Caco-2 (cell line): ENCODE measurements at regions of chr13 and their contacts with region 1.

Region 1: DNA sequence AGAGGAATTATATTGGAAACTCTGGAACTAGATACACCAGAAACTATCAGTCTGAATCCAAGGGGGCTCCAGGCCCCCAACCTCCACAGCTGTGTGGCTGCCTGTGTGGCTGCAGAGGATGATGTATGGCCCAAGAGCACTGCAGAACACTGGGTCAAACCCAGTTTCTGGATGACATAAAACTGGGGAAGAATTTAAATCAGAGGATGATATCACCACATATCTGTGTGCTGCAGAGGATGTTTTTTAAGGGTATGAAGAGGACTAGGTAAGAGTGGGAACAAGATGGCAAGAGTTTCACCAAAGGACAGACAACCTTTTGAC is 226.4 kb downstream of the SUCLA2 start:
- DNase-seq: no peak
- H3K4me3 ChIP-seq: no peak overlapping the region
- H3K4me3 Mint-ChIP-seq: no peak overlapping the region
- H3K27ac Mint-ChIP-seq: no peak overlapping the region
- H3K4me1 ChIP-seq: no peaks in the 10 kb centered on the region
- H3K4me1 Mint-ChIP-seq: no peaks in the 10 kb centered on the region
- H3K27me3 ChIP-seq: peaks cover 1% of the 10 kb centered on the region; the same call in 1 of the 2 replicates
- H3K27me3 Mint-ChIP-seq: peaks cover 3% of the 10 kb centered on the region
- CTCF ChIP-seq: no peak

Region 2: GRCh38 chr13:46831588-46832194 is 942.9 kb before region 1 on chr13:
- CTCF ChIA-PET with region 1: no interaction called
- POLR2A ChIA-PET with region 1: no interaction called
- intact Hi-C with region 1: loop called (anchors 1 kb)
- DNase-seq: peak in 1 of 2 experiments; percentile 56
- H3K4me3 ChIP-seq: no peak overlapping the region
- H3K4me3 Mint-ChIP-seq: no peak overlapping the region
- H3K27ac Mint-ChIP-seq: no peak overlapping the region
- H3K4me1 ChIP-seq: no peaks in the 10 kb centered on the region
- H3K4me1 Mint-ChIP-seq: no peaks in the 10 kb centered on the region
- H3K27me3 ChIP-seq: no peaks in the 10 kb centered on the region
- H3K27me3 Mint-ChIP-seq: peaks cover 14% of the 10 kb centered on the region
- CTCF ChIP-seq: peak; percentile 77 to 86

Region 3: GRCh38 chr13:47426126-47426849 is 348.3 kb before region 1 on chr13:
- CTCF ChIA-PET with region 1: no interaction called
- POLR2A ChIA-PET with region 1: no interaction called
- intact Hi-C with region 1: loop called (anchors 10 kb)
- DNase-seq: no peak
- H3K4me3 ChIP-seq: no peak overlapping the region
- H3K4me3 Mint-ChIP-seq: no peak overlapping the region
- H3K27ac Mint-ChIP-seq: no peak overlapping the region
- H3K4me1 ChIP-seq: no peaks in the 10 kb centered on the region
- H3K4me1 Mint-ChIP-seq: no peaks in the 10 kb centered on the region
- H3K27me3 ChIP-seq: no peaks in the 10 kb centered on the region; the same call in 1 of the 2 replicates
- H3K27me3 Mint-ChIP-seq: peaks cover 4% of the 10 kb centered on the region
- CTCF ChIP-seq: no peak

Region 4: DNA sequence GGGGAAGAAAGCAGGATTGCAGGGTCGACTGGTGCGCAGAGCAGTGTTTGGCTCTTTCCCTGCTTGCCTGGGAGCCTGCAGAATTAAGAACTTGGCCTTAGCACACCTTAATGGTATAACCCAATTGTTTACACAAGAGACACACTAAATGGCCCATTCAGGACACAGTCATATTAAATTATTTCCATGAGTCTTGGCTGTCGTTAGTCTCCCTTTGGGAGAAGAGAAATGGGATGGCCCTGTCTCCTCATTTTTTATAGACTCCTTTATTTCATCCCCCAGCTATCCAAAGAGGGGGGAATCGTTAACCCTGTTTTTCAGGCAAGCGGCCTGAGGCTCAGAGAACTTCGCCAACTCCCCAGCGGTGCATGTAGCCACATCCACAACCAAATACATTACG is 56.1 kb before region 1 on chr13:
- CTCF ChIA-PET with region 1: no interaction called
- POLR2A ChIA-PET with region 1: no interaction called
- intact Hi-C with region 1: no loop called
- DNase-seq: no peak
- H3K4me3 ChIP-seq: no peak overlapping the region
- H3K4me3 Mint-ChIP-seq: no peak overlapping the region
- H3K27ac Mint-ChIP-seq: no peak overlapping the region
- H3K4me1 ChIP-seq: no peaks in the 10 kb centered on the region
- H3K4me1 Mint-ChIP-seq: no peaks in the 10 kb centered on the region
- H3K27me3 ChIP-seq: no peaks in the 10 kb centered on the region
- H3K27me3 Mint-ChIP-seq: peaks cover 2% of the 10 kb centered on the region
- CTCF ChIP-seq: no peak